MCF 10A (cell line): ENCODE measurements at regions of chr7 and their contacts with region 1.

Region 1: GRCh38 chr7:101138213-101138870 is 11.4 kb downstream of the SERPINE1 start:
- DNase-seq: peak; percentile 98
- H3K4me3 Mint-ChIP-seq: peak overlapping the region; percentile 68
- H3K27ac Mint-ChIP-seq: peak overlapping the region; percentile 89
- H3K4me1 Mint-ChIP-seq: peaks cover 50% of the 10 kb centered on the region
- H3K27me3 Mint-ChIP-seq: no peaks in the 10 kb centered on the region
- CTCF ChIP-seq: peak; percentile 93

Region 2: GRCh38 chr7:101009629-101010028 is 128.7 kb before region 1 on chr7:
- CTCF ChIA-PET with region 1: no interaction called
- POLR2A ChIA-PET with region 1: no interaction called
- intact Hi-C with region 1: no loop called
- DNase-seq: no peak
- H3K4me3 Mint-ChIP-seq: no peak overlapping the region
- H3K27ac Mint-ChIP-seq: no peak overlapping the region
- H3K4me1 Mint-ChIP-seq: no peaks in the 10 kb centered on the region
- H3K27me3 Mint-ChIP-seq: peaks cover 45% of the 10 kb centered on the region
- CTCF ChIP-seq: no peak

Region 3: GRCh38 chr7:101085162-101085987 is 53.0 kb before region 1 on chr7 and contains the start of gene TRIM56:
- CTCF ChIA-PET with region 1: interaction called, 10 read pairs
- POLR2A ChIA-PET with region 1: interaction called, 12 read pairs
- intact Hi-C with region 1: no loop called
- DNase-seq: peak; percentile 90
- H3K4me3 Mint-ChIP-seq: peak within 1 kb of the TSS; percentile 94
- H3K27ac Mint-ChIP-seq: peak within 1 kb of the TSS; percentile 98
- H3K4me1 Mint-ChIP-seq: peaks cover 13% of the 10 kb centered on the region
- H3K27me3 Mint-ChIP-seq: no peaks in the 10 kb centered on the region
- CTCF ChIP-seq: no peak
- total RNA-seq, gene TRIM56: 29.6 and 36.8 TPM in 2 replicates

Region 4: GRCh38 chr7:101099969-101100781 is 38.2 kb before region 1 on chr7:
- CTCF ChIA-PET with region 1: interaction called, 12 read pairs
- POLR2A ChIA-PET with region 1: interaction called, 4 read pairs
- intact Hi-C with region 1: loop called (anchors 1 kb)
- DNase-seq: peak; percentile 97
- H3K4me3 Mint-ChIP-seq: peak overlapping the region; percentile 54
- H3K27ac Mint-ChIP-seq: peak overlapping the region; percentile 73
- H3K4me1 Mint-ChIP-seq: peaks cover 29% of the 10 kb centered on the region
- H3K27me3 Mint-ChIP-seq: no peaks in the 10 kb centered on the region
- CTCF ChIP-seq: no peak

Region 5: DNA sequence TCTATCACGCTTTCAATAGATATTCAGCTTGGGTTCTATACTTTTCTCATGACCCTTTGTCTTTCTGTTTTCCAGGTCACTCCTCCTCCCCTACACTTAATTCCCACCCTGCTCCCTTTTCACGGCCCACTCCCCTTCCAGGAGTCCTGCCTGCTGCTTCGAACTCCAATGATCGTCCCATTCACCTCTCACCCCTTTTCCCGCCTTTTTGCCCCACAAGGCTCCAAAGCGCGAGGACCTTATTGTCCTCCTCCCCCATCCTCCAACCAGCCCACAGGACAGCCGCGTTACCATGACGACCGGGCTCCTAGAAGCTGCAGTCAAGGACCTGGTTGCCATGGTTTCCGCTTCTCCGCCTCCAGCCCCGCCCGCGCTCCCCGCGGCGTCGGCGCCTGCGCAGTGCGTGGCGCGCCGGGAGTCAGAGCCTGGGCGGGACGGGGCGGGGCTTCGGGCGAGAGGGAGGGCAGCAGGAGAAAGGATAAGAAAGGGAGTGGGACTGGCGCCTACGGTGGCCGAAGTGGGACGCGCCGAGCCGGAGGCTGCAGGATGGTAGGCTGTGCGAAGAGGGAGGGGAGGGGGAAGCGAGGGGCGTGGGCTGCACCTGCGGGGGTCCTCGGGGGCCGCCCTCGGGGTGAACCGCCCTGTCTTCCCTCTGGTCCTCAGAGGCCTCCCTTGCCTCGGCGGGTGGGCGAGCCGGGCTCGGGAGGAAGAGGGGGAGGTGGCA is 15.8 kb after region 1 on chr7 and contains the start of gene AP1S1:
- CTCF ChIA-PET with region 1: interaction called, 70 read pairs
- POLR2A ChIA-PET with region 1: interaction called, 7 read pairs
- intact Hi-C with region 1: no loop called
- DNase-seq: peak; percentile 93
- H3K4me3 Mint-ChIP-seq: peak within 1 kb of the TSS; percentile 82
- H3K27ac Mint-ChIP-seq: peak within 1 kb of the TSS; percentile 87
- H3K4me1 Mint-ChIP-seq: peaks cover 23% of the 10 kb centered on the region
- H3K27me3 Mint-ChIP-seq: peaks cover 17% of the 10 kb centered on the region
- CTCF ChIP-seq: no peak
- total RNA-seq, gene AP1S1: 72.1 and 72.5 TPM in 2 replicates

Region 6: GRCh38 chr7:101173752-101174244 is 35.5 kb after region 1 on chr7:
- CTCF ChIA-PET with region 1: interaction called, 31 read pairs
- POLR2A ChIA-PET with region 1: no interaction called
- intact Hi-C with region 1: no loop called
- DNase-seq: peak; percentile 68
- H3K4me3 Mint-ChIP-seq: peak overlapping the region; percentile 61
- H3K27ac Mint-ChIP-seq: no peak overlapping the region
- H3K4me1 Mint-ChIP-seq: peaks cover 21% of the 10 kb centered on the region
- H3K27me3 Mint-ChIP-seq: peaks cover 69% of the 10 kb centered on the region
- CTCF ChIP-seq: no peak

Region 7: GRCh38 chr7:101195884-101196283 is 57.5 kb after region 1 on chr7:
- CTCF ChIA-PET with region 1: interaction called, 203 read pairs
- POLR2A ChIA-PET with region 1: interaction called, 4 read pairs
- intact Hi-C with region 1: no loop called
- DNase-seq: no peak
- H3K4me3 Mint-ChIP-seq: no peak overlapping the region
- H3K27ac Mint-ChIP-seq: no peak overlapping the region
- H3K4me1 Mint-ChIP-seq: no peaks in the 10 kb centered on the region
- H3K27me3 Mint-ChIP-seq: peaks cover 8% of the 10 kb centered on the region
- CTCF ChIP-seq: no peak

Region 8: DNA sequence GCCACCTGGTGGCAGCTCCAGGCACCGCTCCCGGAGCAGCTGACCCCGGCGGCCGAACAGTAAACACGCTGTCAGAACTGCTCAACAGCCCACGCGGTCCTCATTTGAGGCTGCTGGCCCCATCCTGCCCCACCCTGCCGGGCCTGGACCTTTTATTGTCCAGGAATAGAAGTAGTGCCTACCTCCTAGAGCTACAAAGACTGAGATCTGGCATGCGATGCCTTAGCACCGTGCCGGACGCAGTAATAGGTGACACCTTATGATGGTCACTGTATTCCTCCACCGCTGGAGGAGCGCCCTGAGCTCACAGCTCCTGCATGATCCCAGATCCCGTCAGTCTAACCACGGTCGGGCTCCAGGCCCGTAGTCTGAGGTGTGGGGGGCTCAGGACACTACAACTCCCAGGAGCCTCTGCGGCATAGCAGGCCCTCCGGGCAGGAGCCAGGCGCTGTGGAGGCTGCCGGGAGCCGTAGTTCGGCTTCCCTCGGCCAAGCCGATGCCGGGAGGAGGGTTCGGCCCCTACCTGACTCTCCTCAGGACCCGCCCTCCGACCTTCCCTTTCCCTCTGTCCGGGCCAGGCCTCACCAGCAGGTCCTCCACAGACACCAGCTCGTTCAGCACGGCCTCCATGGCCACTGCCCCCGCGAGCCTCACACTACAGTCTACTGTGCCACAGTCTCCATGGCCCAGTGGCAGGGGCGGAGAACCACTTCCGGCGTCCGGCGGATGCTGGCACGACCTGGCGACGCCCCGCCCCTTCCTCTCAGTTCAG is 106.2 kb after region 1 on chr7 and contains the start of gene FIS1:
- CTCF ChIA-PET with region 1: interaction called, 55 read pairs
- POLR2A ChIA-PET with region 1: interaction called, 6 read pairs
- intact Hi-C with region 1: no loop called
- DNase-seq: peak; percentile 87
- H3K4me3 Mint-ChIP-seq: peak within 1 kb of the TSS; percentile 80
- H3K27ac Mint-ChIP-seq: peak within 1 kb of the TSS; percentile 97
- H3K4me1 Mint-ChIP-seq: peaks cover 5% of the 10 kb centered on the region
- H3K27me3 Mint-ChIP-seq: no peaks in the 10 kb centered on the region
- CTCF ChIP-seq: peak; percentile 76
- total RNA-seq, gene FIS1: 213 and 221 TPM in 2 replicates